Posterior vena cava (tissue), 2 donors: ENCODE measurements at regions of chr7 and their contacts with region 1.

Region 1: DNA sequence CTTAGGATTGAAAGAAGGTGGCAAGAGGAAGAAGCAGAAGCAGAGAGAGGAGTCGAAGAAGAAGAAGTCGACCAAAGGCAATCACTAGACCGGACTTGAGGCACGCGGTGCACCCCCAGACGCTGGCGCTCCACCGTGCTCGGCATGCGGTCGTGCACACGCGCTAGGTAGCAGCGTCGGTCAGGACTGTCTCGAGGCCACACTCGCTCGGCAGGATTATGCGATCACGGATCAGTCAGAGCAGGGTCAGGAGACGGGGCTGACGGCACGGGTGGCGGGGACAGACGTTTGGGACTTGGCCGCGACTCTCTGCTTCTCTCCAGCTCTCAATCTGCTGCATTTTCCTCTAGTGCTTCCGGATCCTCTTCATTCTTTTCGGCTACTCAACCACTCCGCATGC is 79.2 kb downstream of the DNAJB6 start:
- DNase-seq: no peak

Region 2: GRCh38 chr7:157111311-157111710 is 304.7 kb before region 1 on chr7:
- intact Hi-C with region 1: no loop called
- DNase-seq: peak; percentile 58

Region 3: DNA sequence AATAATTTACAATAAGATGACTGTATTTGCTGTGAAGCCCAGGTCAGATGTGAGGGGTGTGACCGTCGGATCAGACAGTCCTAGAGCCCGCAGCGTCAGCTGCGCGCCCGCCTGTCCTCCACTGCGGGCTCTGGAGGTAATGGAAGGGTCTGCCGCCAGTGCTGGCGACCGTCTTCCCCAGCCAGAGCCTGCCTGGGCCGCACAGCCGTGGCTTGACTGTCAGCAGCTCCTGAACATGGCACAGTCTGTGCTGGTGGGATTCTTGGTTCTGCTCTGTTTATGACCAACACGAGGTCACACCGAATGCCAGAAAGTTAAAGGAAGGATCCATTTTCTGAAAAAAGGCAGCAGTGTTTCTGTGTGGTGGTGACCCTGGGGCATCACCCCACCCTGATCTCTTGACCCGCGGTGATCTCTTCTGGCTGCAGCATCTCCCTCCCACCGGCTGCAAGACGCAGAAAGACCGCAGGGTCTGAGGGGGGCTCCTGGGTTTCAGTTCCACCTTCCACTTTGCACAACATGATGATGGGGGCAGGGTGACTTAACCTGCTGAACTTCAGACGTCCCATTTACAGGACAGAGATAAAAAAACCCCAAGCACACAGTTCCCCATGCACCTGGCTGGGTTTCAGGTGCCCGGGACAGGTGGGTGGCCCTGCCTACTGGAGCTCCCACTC is 24.5 kb after region 1 on chr7:
- intact Hi-C with region 1: loop called in 1 of 2 experiments (anchors 1 kb)
- DNase-seq: peak; percentile 72

Region 4: DNA sequence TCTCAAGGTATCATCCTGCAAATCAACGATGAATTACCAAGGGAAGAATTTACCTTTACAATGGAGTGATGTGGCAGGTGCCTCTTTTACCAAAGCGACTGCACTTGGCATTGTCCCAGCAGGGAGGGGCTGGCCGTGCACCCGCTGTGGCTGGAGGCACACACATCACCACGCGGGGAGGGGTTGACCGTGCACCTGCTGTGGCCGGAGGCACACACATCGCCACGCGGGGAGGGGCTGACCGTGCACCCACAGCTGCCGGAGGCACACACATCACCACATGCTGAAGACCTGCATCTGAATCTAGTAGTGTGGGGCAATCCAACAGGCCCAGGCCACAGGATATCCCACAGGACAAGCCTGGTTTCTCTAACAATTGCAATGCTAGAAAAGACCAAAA is 414.3 kb after region 1 on chr7:
- intact Hi-C with region 1: no loop called
- DNase-seq: peak; percentile 66